Caco-2 (cell line): ENCODE measurements at regions of chr7 and their contacts with region 1.

Region 1: DNA sequence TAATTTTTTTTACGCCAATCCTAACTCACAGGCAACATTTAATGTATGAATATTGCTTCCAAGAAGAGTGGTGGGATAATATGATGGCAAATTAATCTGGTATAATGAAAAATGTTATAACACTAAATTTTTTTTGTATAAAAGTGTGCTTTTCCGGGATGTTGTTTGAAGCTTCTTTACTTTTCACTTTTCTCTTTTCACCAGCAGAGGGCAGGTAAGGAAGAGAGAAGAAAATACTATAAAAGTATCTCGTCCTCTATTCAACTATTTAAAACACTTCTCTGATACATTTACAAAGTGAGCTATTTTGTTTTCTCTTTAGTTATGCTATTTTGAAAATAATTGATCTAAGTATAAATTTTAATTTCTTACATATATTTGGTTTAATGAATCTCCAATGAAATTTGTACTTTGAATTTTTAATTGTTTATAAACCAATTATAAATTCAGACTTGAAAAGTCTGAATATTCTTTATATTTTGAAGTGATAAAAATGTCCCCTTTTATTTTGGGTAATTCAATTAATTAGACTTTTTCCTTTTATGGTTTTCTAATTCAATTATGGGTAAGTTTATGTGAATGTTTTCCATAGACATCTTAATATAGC is 20.7 kb upstream of the CFTR start:
- DNase-seq: peak in 1 of 2 experiments; percentile 30
- H3K4me3 ChIP-seq: no peak overlapping the region
- H3K4me3 Mint-ChIP-seq: no peak overlapping the region
- H3K27ac Mint-ChIP-seq: no peak overlapping the region
- H3K4me1 ChIP-seq: 0 out of 2 replicates have a peak, but pooled peaks cover 2% of the 10 kb centered on the region
- H3K4me1 Mint-ChIP-seq: no peaks in the 10 kb centered on the region
- H3K27me3 ChIP-seq: no peaks in the 10 kb centered on the region
- H3K27me3 Mint-ChIP-seq: no peaks in the 10 kb centered on the region
- CTCF ChIP-seq: peak; percentile 65 to 71

Region 2: GRCh38 chr7:117505245-117505644 is 46.2 kb after region 1 on chr7:
- CTCF ChIA-PET with region 1: no interaction called
- POLR2A ChIA-PET with region 1: no interaction called
- intact Hi-C with region 1: loop called (anchors 1 kb)
- DNase-seq: no peak
- H3K4me3 ChIP-seq: no peak overlapping the region
- H3K4me3 Mint-ChIP-seq: no peak overlapping the region
- H3K27ac Mint-ChIP-seq: no peak overlapping the region
- H3K4me1 ChIP-seq: peaks cover 14% of the 10 kb centered on the region
- H3K4me1 Mint-ChIP-seq: peaks cover 9% of the 10 kb centered on the region
- H3K27me3 ChIP-seq: no peaks in the 10 kb centered on the region
- H3K27me3 Mint-ChIP-seq: no peaks in the 10 kb centered on the region
- CTCF ChIP-seq: no peak